Uterus (tissue), 4 donors: ENCODE measurements at regions of chr3 and their contacts with region 1.

Region 1: DNA sequence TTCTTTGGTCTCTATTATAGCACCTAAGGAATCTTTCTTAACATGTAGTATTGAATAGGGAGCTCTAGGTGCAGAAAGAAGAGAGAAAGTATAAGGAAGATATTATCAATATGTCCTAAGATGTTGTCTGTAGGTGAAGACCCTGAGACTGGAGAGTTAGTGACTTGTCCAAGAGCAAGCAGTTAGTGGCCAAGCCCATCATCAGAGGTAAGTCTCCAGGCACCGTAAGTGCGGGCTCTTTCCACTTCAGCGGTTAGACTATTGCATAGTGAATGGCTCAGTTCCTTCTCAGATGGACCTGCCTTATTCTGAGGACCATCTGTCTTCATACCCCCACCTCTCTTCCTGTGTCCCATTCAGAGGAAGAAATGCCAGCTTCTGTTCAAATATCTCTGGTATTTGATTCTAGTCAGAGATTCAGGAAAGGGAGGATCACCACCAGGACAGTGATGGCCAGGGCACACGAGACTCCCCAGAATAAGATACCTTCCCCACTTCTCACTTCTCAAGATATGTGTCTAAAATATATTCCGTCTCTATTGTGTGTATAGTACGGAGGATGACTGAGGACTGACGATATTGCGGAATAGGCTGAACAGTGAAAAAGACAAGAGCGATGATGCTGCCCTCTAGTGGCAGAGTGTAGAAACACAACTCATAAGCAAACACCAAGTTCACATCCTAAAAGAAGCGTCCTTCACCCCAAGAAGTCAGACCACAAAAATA is 19.1 kb upstream of the ADGRG7 start:
- DNase-seq: peak; percentile 55 to 77
- H3K4me3 ChIP-seq: no peak overlapping the region
- H3K27ac ChIP-seq: no peak overlapping the region
- H3K4me1 ChIP-seq: no peaks in the 10 kb centered on the region
- H3K27me3 ChIP-seq: no peaks in the 10 kb centered on the region
- CTCF ChIP-seq: peak; percentile 80 to 85 (median 84)
- POLR2A ChIP-seq: no peak

Region 2: DNA sequence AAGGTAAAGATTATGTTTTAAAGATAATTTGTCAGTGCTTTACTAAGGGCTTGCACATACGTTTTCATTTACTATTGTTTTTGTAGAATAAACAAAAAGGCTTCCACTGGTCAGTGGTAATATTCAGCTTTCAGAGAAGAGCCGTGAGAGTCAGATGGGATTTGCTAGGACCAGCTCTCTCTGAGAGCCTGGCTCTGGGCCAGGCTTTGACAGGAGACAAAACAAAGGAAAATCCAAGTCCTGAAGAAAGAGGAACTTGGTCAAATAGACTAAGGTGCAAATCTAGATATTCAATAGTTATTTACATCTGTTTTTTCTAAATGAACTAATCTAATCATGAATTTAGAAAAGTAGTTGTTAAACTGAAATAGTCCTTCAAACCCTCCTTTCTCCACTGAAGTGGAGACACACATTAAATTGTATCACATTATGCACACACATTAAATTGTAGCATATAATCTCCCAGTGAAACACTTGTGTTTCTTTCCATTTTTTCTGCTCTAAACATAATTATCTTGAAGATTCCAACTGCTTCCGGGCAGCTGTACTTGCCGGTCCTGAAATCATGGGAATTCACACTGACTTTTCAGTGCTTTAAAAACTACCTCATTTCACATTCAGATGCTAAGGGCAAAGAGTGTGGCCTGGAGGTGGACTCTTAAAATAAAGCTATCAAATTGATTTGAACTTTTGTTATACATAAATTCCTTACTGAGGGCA is 420.9 kb before region 1 on chr3:
- intact Hi-C with region 1: no loop called
- DNase-seq: no peak
- H3K4me3 ChIP-seq: no peak overlapping the region
- H3K27ac ChIP-seq: no peak overlapping the region
- H3K4me1 ChIP-seq: no peaks in the 10 kb centered on the region
- H3K27me3 ChIP-seq: no peaks in the 10 kb centered on the region
- CTCF ChIP-seq: no peak
- POLR2A ChIP-seq: no peak

Region 3: GRCh38 chr3:100463002-100463401 is 127.3 kb before region 1 on chr3:
- intact Hi-C with region 1: loop called (anchors 5 kb)
- DNase-seq: peak in 1 of 2 donors; percentile 45
- H3K4me3 ChIP-seq: no peak overlapping the region
- H3K27ac ChIP-seq: no peak overlapping the region
- H3K4me1 ChIP-seq: no peaks in the 10 kb centered on the region
- H3K27me3 ChIP-seq: no peaks in the 10 kb centered on the region
- CTCF ChIP-seq: peak; percentile 59 to 84 (median 75)
- POLR2A ChIP-seq: no peak